ENCODE measurements at regions of chr18 and their contacts with region 1.

Region 1: GRCh38 chr18:21134898-21135297 is 23.3 kb upstream of the ROCK1 start:
- DNase-seq: no peak
- ATAC-seq: no peak
- H3K4me3 ChIP-seq: no peak overlapping the region
- H3K27ac ChIP-seq: no peak overlapping the region
- H3K4me1 ChIP-seq: no peaks in the 10 kb centered on the region; a peak in 1 of 5 replicates
- H3K27me3 ChIP-seq: no peaks in the 10 kb centered on the region; a peak in 1 of 5 replicates
- CTCF ChIP-seq: no peak; a peak in 1 of 6 replicates
- EP300 ChIP-seq: no peak
- POLR2A ChIP-seq: no peak
- RAD21 ChIP-seq: no peak

Region 2: GRCh38 chr18:20971886-20972267 is 163.0 kb before region 1 on chr18:
- CTCF ChIA-PET with region 1: no interaction called
- POLR2A ChIA-PET with region 1: no interaction called
- in situ Hi-C with region 1: no loop called
- intact Hi-C with region 1: loop called (anchors 10 kb)
- DNase-seq: peak; percentile 15 to 25 (median 22)
- ATAC-seq: peak; percentile 80
- H3K4me3 ChIP-seq: no peak overlapping the region
- H3K27ac ChIP-seq: no peak overlapping the region
- H3K4me1 ChIP-seq: no peaks in the 10 kb centered on the region
- H3K27me3 ChIP-seq: no peaks in the 10 kb centered on the region
- CTCF ChIP-seq: peak; percentile 28 to 45 (median 39); a peak in 4 of 6 replicates
- EP300 ChIP-seq: no peak
- POLR2A ChIP-seq: no peak
- RAD21 ChIP-seq: peak in 1 of 2 experiments; percentile 11; a peak in 1 of 4 replicates

Region 3: DNA sequence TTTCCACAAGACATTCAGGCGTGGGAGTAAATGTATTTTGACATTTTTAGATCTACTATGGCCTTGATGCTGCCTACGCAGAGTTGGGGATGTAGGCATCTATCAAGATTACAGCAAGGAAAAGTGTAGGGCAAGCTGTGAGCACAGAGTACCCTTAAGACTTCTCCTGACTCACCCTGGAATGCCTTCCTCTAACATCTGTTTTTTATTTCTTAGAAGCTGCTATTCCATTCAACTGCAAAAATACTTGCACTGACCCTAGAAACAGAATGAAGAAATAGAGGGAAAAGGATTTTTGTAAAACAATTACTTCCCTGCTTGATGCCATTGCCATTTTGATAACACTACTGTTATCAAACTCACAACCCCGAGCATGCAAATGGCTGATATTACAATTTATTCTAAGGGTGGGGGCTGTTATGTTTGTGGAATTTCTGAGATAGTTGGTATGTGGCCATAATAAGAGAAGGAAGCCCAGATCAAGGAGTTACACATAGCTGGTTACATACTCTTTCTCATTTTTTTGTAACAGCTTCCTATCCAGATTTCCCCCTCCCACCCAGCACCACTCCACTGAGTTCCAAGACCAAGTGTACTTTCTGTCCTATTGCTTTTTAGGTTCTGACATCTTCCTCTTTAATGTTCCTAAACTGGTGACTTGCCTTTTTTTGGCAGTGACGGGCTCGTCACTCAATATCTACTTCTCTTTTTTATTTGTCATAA is 17.3 kb before region 1 on chr18:
- CTCF ChIA-PET with region 1: no interaction called
- POLR2A ChIA-PET with region 1: interaction called, 13 read pairs
- in situ Hi-C with region 1: no loop called
- intact Hi-C with region 1: no loop called
- DNase-seq: peak in 1 of 4 experiments; percentile 7
- ATAC-seq: no peak; the same call in 2 of the 3 replicates
- H3K4me3 ChIP-seq: no peak overlapping the region
- H3K27ac ChIP-seq: no peak overlapping the region
- H3K4me1 ChIP-seq: no peaks in the 10 kb centered on the region; a peak in 1 of 5 replicates
- H3K27me3 ChIP-seq: no peaks in the 10 kb centered on the region; a peak in 1 of 5 replicates
- CTCF ChIP-seq: no peak
- EP300 ChIP-seq: no peak
- POLR2A ChIP-seq: no peak
- RAD21 ChIP-seq: no peak

Region 4: GRCh38 chr18:21593540-21594257 is 458.8 kb after region 1 on chr18:
- CTCF ChIA-PET with region 1: no interaction called
- POLR2A ChIA-PET with region 1: no interaction called
- in situ Hi-C with region 1: no loop called
- intact Hi-C with region 1: no loop called
- DNase-seq: no peak
- ATAC-seq: peak; percentile 72
- H3K4me3 ChIP-seq: no peak overlapping the region
- H3K27ac ChIP-seq: no peak overlapping the region; the same call in 2 of the 3 replicates
- H3K4me1 ChIP-seq: peaks cover 0 to 2% of the 10 kb centered on the region in 2 experiments; a peak in 1 of 5 replicates
- H3K27me3 ChIP-seq: no peaks in the 10 kb centered on the region
- CTCF ChIP-seq: peak; percentile 22 to 41 (median 36); a peak in 2 of 6 replicates
- EP300 ChIP-seq: no peak
- POLR2A ChIP-seq: no peak
- RAD21 ChIP-seq: no peak

Measured in K562 (cell line).